Colonic mucosa (tissue), 4 donors: ENCODE measurements at regions of chr5 and their contacts with region 1.

Region 1: GRCh38 chr5:131413605-131414559 is 150.0 kb downstream of the CDC42SE2 start:
- DNase-seq: no peak
- H3K4me3 ChIP-seq: no peak overlapping the region
- H3K27ac ChIP-seq: no peak overlapping the region
- H3K4me1 ChIP-seq: no peaks in the 10 kb centered on the region
- H3K27me3 ChIP-seq: no peaks in the 10 kb centered on the region
- CTCF ChIP-seq: no peak

Region 2: DNA sequence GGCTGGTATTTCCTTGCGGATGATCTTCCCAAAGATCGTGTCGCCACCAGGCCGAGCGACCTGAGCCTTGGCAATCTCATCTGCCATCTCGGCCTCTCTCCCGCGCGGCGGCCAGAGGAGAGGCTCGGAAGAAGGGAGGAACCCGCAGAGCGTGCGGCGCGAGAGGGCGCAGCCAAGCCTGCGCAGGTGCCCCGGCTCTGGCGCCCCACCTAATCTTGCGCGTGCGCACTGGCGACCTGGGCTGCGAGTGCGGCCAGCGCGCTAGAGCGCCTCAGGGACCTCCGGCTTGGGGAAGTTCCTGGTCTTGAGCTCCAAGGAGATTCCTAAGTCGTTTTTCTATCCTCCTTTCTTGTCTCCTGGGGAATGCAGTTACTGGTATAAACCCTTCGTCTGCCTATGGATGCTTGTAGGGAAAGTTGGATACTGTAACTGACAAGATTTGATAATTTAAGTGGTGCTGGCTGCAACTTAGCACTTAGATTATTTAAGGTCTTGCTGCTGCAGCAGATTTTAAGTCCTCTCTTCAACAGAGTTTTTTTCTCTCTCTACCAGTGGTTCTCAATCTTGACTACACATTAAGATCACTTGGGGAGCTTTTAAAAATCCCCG is 248.7 kb before region 1 on chr5 and contains the start of gene HINT1:
- intact Hi-C with region 1: loop called (anchors 5 kb)
- DNase-seq: peak; percentile 95
- H3K4me3 ChIP-seq: peak within 1 kb of the TSS; percentile 71
- H3K27ac ChIP-seq: peak within 1 kb of the TSS; percentile 99
- H3K4me1 ChIP-seq: no peaks in the 10 kb centered on the region
- H3K27me3 ChIP-seq: no peaks in the 10 kb centered on the region
- CTCF ChIP-seq: no peak
- total RNA-seq, gene HINT1: 269 to 288 TPM

Region 3: GRCh38 chr5:131212471-131213021 is 201.3 kb before region 1 on chr5:
- intact Hi-C with region 1: no loop called
- DNase-seq: no peak
- H3K4me3 ChIP-seq: no peak overlapping the region
- H3K27ac ChIP-seq: no peak overlapping the region
- H3K4me1 ChIP-seq: peaks cover 6% of the 10 kb centered on the region
- H3K27me3 ChIP-seq: no peaks in the 10 kb centered on the region
- CTCF ChIP-seq: no peak